Activated CD8-positive, alpha-beta T cell treated with anti-CD3 and anti-CD28 coated beads for 36 hours (primary cell): ENCODE measurements at regions of chr16 and their contacts with region 1.

Region 1: GRCh38 chr16:77675464-77676324 is 46.6 kb upstream of the NUDT7 start:
- DNase-seq: peak; percentile 78
- ATAC-seq: peak; percentile 83
- H3K4me3 Mint-ChIP-seq: no peak overlapping the region
- H3K27ac Mint-ChIP-seq: no peak overlapping the region
- H3K4me1 Mint-ChIP-seq: no peaks in the 10 kb centered on the region
- H3K27me3 Mint-ChIP-seq: peaks cover 1% of the 10 kb centered on the region
- CTCF ChIP-seq: peak; percentile 74

Region 2: GRCh38 chr16:77788181-77789084 is 112.7 kb after region 1 on chr16 and contains the start of gene VAT1L:
- CTCF ChIA-PET with region 1: interaction called, 3 read pairs
- POLR2A ChIA-PET with region 1: no interaction called
- intact Hi-C with region 1: loop called (anchors 10 kb)
- DNase-seq: peak; percentile 9
- ATAC-seq: no peak
- H3K4me3 Mint-ChIP-seq: peak within 1 kb of the TSS; percentile 48
- H3K27ac Mint-ChIP-seq: no peak within 1 kb of the TSS
- H3K4me1 Mint-ChIP-seq: peaks cover 4% of the 10 kb centered on the region
- H3K27me3 Mint-ChIP-seq: peaks cover 61% of the 10 kb centered on the region
- CTCF ChIP-seq: no peak
- total RNA-seq, gene VAT1L: not detected

Region 3: DNA sequence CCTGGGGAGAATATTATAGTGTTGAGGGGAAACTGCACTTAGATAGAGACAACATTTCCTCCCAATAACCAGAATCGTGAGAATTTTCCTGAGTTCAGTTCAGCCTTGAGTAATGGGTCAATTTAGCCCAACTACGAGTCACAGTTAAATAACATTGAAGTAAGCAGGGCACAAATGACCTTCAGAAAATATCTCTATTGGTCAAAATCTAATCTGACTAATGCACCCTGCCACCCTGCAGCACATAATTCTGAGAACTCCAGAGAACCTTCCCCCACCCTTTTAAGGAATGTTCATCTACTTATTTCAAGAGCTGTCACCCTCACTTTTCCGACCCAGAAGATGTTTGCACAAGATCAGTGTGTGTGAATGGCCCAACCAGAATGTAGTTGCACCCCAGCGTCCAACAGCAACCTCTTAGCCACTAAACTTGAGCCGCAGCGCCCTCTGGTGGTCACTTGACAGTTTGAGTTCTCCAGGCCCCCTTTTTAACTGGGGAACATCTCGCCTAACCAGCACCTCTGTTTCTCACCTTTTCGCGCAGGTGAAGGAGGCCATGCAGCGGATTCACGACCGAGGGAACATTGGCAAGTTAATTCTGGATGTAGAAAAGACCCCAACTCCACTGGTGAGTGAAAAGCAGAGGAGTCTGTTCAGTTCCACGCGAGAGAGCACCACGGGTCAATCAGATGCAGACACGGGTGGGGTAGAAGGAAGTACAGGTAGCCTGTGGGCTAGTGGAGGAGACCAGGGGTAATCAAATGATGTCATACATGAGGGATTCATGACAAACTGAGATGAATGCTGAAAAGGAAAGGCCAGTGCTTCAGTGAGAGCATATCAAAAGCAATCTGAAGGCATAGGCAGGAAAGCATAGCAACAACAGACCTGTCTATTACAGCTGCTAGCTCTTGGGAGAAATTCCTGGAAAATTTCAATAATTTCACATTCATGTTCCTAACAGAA is 295.9 kb after region 1 on chr16:
- CTCF ChIA-PET with region 1: interaction called, 21 read pairs
- POLR2A ChIA-PET with region 1: no interaction called
- intact Hi-C with region 1: loop called (anchors 1 kb)
- DNase-seq: peak; percentile 85
- ATAC-seq: peak; percentile 60
- H3K4me3 Mint-ChIP-seq: no peak overlapping the region
- H3K27ac Mint-ChIP-seq: no peak overlapping the region
- H3K4me1 Mint-ChIP-seq: no peaks in the 10 kb centered on the region
- H3K27me3 Mint-ChIP-seq: peaks cover 7% of the 10 kb centered on the region
- CTCF ChIP-seq: peak; percentile 72